ENCODE measurements at regions of chrX and their contacts with region 1.

Region 1: DNA sequence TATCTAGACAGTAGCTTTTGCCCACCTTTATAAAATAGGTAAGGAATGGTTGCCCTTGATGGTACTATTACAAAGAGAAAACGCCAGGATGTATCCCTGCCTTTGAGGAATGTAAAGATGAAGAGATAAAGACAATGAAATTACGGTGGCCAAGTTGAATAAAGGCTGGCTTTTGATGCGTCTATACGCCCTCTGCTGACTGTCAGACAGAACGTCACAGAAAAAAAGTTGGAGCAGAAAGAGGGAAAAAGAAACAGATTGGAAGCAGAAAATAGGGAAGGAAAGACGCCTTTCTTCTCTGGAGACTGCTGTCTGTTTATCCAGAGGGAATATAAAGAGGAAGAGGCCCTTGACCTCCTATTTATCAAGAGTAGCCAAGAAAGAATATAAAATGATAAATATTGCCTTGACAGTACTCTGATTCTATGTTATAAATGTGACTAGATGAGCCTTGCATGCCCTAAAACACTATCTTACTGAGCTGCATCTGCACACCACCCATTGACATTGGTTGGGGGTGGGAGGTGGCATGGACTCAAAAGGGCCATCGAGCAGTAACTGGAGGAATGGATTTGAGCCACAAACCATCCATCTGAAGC is 30.6 kb downstream of the PCDH19 start:
- DNase-seq: no peak
- ATAC-seq: peak; percentile 66
- H3K4me3 ChIP-seq: no peak overlapping the region
- H3K27ac ChIP-seq: no peak overlapping the region
- H3K4me1 ChIP-seq: no peaks in the 10 kb centered on the region
- H3K27me3 ChIP-seq: no peaks in the 10 kb centered on the region
- CTCF ChIP-seq: peak; percentile 50 to 53 (median 52); a peak in 5 of 6 replicates
- EP300 ChIP-seq: no peak
- POLR2A ChIP-seq: no peak
- RAD21 ChIP-seq: peak; percentile 62

Region 2: GRCh38 chrX:100072336-100072735 is 307.2 kb before region 1 on chrX:
- CTCF ChIA-PET with region 1: no interaction called
- POLR2A ChIA-PET with region 1: no interaction called
- RAD21 ChIA-PET with region 1: no interaction called
- SMC1A ChIA-PET with region 1: no interaction called
- in situ Hi-C with region 1: no loop called
- intact Hi-C with region 1: loop called (anchors 10 kb)
- DNase-seq: no peak
- ATAC-seq: no peak
- H3K4me3 ChIP-seq: no peak overlapping the region
- H3K27ac ChIP-seq: no peak overlapping the region
- H3K4me1 ChIP-seq: no peaks in the 10 kb centered on the region
- H3K27me3 ChIP-seq: no peaks in the 10 kb centered on the region
- CTCF ChIP-seq: no peak
- EP300 ChIP-seq: no peak
- POLR2A ChIP-seq: no peak
- RAD21 ChIP-seq: no peak

Region 3: DNA sequence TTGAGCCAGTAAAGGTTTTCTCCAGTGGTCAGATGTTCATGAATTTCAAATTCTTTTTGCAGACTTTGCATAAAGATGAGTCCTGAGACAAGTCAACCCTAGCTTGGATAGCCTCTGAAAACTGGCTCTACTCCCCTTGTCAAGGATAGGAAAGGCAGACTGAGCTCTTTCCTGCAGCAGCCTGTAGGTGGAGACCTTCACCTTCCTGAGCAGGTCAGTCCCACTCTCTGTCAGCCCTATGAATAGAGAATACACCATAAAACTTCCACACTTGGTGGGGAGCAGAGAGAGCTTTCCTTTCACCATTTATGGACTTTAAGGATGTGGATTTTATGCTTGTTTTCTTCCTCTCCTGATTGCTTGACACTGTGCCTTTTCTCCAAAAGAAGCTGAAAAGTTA is 11.3 kb before region 1 on chrX:
- CTCF ChIA-PET with region 1: interaction called, 21 read pairs
- POLR2A ChIA-PET with region 1: no interaction called
- RAD21 ChIA-PET with region 1: interaction called, 8 read pairs
- SMC1A ChIA-PET with region 1: interaction called, 12 read pairs
- in situ Hi-C with region 1: no loop called
- intact Hi-C with region 1: no loop called
- DNase-seq: no peak
- ATAC-seq: peak; percentile 79
- H3K4me3 ChIP-seq: no peak overlapping the region
- H3K27ac ChIP-seq: no peak overlapping the region
- H3K4me1 ChIP-seq: no peaks in the 10 kb centered on the region
- H3K27me3 ChIP-seq: no peaks in the 10 kb centered on the region
- CTCF ChIP-seq: peak; percentile 44 to 57 (median 47)
- EP300 ChIP-seq: no peak
- POLR2A ChIP-seq: no peak
- RAD21 ChIP-seq: peak; percentile 39